WTC11 (cell line): ENCODE measurements at regions of chr2 and their contacts with region 1.

Region 1: DNA sequence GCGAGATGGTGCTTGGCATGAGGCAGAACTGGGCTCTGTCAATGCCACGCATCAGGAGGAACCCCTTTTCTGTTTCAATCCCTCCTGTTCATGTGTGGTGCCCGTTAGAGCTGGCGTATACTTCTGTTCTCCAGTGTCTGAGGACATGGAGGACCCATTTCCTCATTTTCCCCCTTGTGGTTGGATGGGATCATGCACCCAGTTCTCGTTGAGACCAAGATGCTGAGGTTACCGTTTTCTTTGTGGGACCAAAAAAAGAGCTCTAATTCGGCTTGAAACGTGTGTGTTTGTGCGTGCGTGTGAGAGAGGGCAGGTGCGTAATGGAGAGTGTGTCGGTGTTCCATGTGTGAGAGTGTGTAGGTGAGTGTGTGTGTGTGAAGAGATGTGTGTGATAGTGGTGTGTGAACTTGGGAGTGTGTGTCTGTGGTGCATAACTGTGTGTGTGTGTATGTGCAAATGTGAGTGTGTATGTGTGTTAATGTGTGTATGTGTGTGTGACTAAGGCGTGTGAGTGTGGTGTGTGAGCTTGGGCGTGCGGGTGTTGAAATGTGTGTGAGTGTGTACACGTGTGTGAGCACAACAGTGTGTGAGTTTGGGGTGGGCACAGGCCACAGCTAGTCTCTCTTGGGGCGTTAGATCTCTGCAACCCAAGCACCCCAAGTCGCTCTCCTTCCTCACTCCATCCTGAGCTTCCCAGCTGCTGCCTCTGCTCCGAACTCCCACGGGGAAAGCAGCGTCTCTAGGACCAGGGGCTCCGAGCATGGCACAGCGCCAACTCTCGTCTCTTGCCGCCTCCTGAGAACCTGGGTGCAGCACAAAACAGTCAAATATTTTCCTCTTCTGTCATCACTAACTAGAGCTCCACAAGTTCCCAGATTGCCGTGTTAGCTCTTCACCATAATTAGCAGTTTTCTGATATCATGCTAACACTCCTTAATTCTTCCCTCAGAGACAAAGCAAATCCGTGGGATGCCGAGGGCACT is 75.8 kb downstream of the LONRF2 start:
- DNase-seq: peak; percentile 29
- ATAC-seq: peak; percentile 47
- H3K4me3 Mint-ChIP-seq: no peak overlapping the region
- H3K27ac Mint-ChIP-seq: no peak overlapping the region
- H3K4me1 Mint-ChIP-seq: no peaks in the 10 kb centered on the region; the same call in 1 of the 2 replicates
- H3K27me3 Mint-ChIP-seq: peaks cover 3% of the 10 kb centered on the region; the same call in 1 of the 2 replicates
- CTCF ChIP-seq: peak; percentile 57

Region 2: DNA sequence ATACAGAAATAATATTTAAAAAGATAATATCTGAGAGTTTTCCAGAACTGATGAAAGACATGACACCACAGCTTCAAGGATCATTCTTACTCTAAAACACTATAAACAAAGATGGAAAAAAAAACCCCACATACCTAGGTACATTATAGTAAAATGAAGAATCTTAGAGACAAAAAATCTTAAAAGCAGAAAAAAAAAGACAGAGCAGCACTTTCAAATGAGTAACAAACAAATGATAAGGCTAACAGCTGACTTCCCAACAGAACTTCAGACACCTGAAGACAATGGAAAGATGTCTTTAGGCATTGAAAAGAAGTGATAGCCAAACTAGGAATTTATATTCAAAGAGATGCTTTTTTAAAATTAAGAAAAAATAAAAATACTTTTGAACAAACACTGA is 82.8 kb before region 1 on chr2:
- CTCF ChIA-PET with region 1: no interaction called
- POLR2A ChIA-PET with region 1: no interaction called
- DNase-seq: no peak
- ATAC-seq: no peak
- H3K4me3 Mint-ChIP-seq: no peak overlapping the region
- H3K27ac Mint-ChIP-seq: no peak overlapping the region
- H3K4me1 Mint-ChIP-seq: no peaks in the 10 kb centered on the region
- H3K27me3 Mint-ChIP-seq: no peaks in the 10 kb centered on the region
- CTCF ChIP-seq: no peak

Region 3: DNA sequence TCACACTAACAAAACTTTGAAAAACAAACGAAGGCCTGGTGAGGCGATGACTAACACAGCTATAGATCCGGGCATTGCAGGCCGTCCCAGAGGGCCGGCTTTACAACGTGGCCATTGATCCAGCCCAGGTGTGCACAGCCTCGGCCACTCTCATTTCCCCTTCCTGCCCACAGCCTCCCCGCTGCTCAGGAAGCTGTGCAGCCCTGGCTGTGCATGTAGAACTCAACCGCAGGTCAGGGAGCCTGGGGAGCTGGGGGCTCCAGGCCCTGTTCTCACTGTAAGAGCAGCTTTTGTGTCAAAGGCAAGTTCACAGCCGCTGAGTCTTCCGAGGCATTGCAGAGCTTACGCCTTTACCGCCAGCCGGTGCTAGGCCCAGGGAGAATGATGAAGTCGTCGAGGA is 11.4 kb before region 1 on chr2:
- CTCF ChIA-PET with region 1: interaction called, 10 read pairs
- POLR2A ChIA-PET with region 1: no interaction called
- DNase-seq: peak; percentile 25
- ATAC-seq: peak; percentile 61
- H3K4me3 Mint-ChIP-seq: no peak overlapping the region
- H3K27ac Mint-ChIP-seq: peak overlapping the region; percentile 42; the same call in 1 of the 2 replicates
- H3K4me1 Mint-ChIP-seq: peaks cover 37% of the 10 kb centered on the region
- H3K27me3 Mint-ChIP-seq: no peaks in the 10 kb centered on the region; the same call in 1 of the 2 replicates
- CTCF ChIP-seq: no peak